Caco-2 (cell line): ENCODE measurements at regions of chr17 and their contacts with region 1.

Region 1: DNA sequence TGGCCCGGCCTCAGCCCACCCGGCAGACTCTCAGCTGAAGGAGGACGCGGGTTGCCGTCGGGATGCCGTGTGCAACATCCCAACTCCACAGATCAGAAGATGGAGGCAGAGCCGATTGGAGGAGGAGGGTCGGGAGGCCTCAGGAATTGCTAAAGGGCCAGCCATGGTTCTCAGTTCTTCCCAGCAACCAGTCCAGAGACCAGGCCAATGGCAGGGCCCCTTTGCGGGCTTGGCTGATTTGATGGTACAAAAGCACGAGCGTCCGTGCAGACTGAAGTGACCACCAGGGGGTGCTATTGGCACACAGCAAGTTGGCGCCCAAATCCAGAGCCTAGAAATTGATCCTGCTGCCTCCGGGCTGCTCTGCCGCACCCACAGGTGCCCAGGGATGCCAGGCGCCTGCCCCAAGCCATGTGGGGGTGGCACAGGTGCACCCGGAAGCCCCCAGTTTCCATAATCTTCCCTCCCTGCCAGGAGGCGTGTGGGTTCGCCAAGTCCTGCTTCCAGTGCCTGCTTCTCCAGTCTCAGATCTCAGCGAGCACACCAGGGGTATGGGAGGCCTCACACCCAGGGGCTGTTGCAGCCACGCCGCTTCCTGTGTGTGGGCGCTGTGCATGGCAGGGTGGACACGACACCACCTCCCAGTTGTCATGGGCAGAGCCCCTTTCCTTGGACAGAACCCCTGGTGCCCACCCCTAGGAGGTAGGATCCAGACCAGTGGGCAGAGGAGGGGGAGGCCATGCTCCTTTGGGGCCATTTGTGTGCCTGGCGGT is 7.1 kb upstream of the TEX19 start:
- DNase-seq: peak; percentile 83 to 89
- H3K4me3 ChIP-seq: no peak overlapping the region
- H3K4me3 Mint-ChIP-seq: no peak overlapping the region
- H3K27ac Mint-ChIP-seq: no peak overlapping the region
- H3K4me1 ChIP-seq: peaks cover 22% of the 10 kb centered on the region
- H3K4me1 Mint-ChIP-seq: peaks cover 23% of the 10 kb centered on the region
- H3K27me3 ChIP-seq: no peaks in the 10 kb centered on the region
- H3K27me3 Mint-ChIP-seq: no peaks in the 10 kb centered on the region
- CTCF ChIP-seq: peak; percentile 95 to 97

Region 2: DNA sequence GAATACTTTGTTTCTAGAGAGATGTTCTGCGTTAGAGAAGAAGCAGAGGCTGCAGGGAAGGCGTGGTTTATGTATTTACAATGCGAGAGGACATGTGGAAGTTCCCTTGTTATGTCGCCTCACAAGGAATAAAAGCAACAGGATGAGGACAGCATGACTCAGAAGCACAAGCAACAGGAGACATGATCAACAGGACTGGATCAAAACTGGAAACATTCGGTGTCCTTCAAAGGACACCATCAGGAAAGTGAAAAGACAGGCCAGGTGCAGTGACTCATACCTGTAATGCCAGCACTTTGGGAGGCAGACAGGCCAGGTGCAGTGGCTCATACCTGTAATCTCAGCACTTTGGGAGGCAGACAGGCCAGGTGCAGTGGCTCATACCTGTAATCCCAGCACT is 191.8 kb before region 1 on chr17:
- CTCF ChIA-PET with region 1: no interaction called
- POLR2A ChIA-PET with region 1: no interaction called
- intact Hi-C with region 1: no loop called
- DNase-seq: peak in 1 of 2 experiments; percentile 18
- H3K4me3 ChIP-seq: no peak overlapping the region
- H3K4me3 Mint-ChIP-seq: no peak overlapping the region
- H3K27ac Mint-ChIP-seq: no peak overlapping the region
- H3K4me1 ChIP-seq: no peaks in the 10 kb centered on the region
- H3K4me1 Mint-ChIP-seq: no peaks in the 10 kb centered on the region
- H3K27me3 ChIP-seq: no peaks in the 10 kb centered on the region
- H3K27me3 Mint-ChIP-seq: no peaks in the 10 kb centered on the region
- CTCF ChIP-seq: no peak

Region 3: DNA sequence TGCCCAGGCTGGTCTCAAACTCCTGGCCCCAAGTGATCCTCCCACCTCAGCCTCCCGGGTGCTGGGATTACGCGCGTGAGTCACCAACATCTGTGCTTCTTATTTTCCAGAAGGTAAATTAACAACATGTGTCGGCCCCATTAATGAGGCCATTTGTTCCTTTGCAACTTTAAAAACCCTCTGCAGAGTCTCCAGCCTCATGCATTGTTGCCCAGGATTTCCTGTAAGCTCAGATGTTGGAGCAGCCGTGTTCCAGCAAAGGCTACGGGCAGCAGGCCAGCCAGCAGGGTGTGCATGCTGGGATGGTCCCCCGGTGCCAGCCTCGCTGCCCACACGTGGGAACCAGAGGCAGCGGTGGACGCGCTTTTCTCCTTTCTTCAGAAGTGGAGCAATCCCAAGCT is 47.1 kb after region 1 on chr17:
- CTCF ChIA-PET with region 1: no interaction called
- POLR2A ChIA-PET with region 1: no interaction called
- intact Hi-C with region 1: loop called (anchors 5 kb)
- DNase-seq: no peak
- H3K4me3 ChIP-seq: no peak overlapping the region
- H3K4me3 Mint-ChIP-seq: no peak overlapping the region
- H3K27ac Mint-ChIP-seq: no peak overlapping the region
- H3K4me1 ChIP-seq: peaks cover 12% of the 10 kb centered on the region
- H3K4me1 Mint-ChIP-seq: peaks cover 24% of the 10 kb centered on the region
- H3K27me3 ChIP-seq: no peaks in the 10 kb centered on the region
- H3K27me3 Mint-ChIP-seq: no peaks in the 10 kb centered on the region
- CTCF ChIP-seq: no peak

Region 4: GRCh38 chr17:82418001-82418986 is 66.4 kb after region 1 on chr17 and contains the starts of genes HEXD and OGFOD3:
- CTCF ChIA-PET with region 1: no interaction called
- POLR2A ChIA-PET with region 1: no interaction called
- intact Hi-C with region 1: loop called (anchors 5 kb)
- DNase-seq: peak; percentile 83 to 94
- H3K4me3 ChIP-seq: peak within 1 kb of the TSS; percentile 95
- H3K4me3 Mint-ChIP-seq: peak within 1 kb of the TSS; percentile 80
- H3K27ac Mint-ChIP-seq: no peak within 1 kb of the TSS
- H3K4me1 ChIP-seq: 0 out of 2 replicates have a peak, but pooled peaks cover 3% of the 10 kb centered on the region
- H3K4me1 Mint-ChIP-seq: no peaks in the 10 kb centered on the region
- H3K27me3 ChIP-seq: no peaks in the 10 kb centered on the region
- H3K27me3 Mint-ChIP-seq: no peaks in the 10 kb centered on the region
- CTCF ChIP-seq: no peak
- total RNA-seq, gene HEXD: 29.5 and 34.2 TPM in 2 replicates
- total RNA-seq, gene OGFOD3: 47.2 and 51.2 TPM in 2 replicates

Region 5: DNA sequence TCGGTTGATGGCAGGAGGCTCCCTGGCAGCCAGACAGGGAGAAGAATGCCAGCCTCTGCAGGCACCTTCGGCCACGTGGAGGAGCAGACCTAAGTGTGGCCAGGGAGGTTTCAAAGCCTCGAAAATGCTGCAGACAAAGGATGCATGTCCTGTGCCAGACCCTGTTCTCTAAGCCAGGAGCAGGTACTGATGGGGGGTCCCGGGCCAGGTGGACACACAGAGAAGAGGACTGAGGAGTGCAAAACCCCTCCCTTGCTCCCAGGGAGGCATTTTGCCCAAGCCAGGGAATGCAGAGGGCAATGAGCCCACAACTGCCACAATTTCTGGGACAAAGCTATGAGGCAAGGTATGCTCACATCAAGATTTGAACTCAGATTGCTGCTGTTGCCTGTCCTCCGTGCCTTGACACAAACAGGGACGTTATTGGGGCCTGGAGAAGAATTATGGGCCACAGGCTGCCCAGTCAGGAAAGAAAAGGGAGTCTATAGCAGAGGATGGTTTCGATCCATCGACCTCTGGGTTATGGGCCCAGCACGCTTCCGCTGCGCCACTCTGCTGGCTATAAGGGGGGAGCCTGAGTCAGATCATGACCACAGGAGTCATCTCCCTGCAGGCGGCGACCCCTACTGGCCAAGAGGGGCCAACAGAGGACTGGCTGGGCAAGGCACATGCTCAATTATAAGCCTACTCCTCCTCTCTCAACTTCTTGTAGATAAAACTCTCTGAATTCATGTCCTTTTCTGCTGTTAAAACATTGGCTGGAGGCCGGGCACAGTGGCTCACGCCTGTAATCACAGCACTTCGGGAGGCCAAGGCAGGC is 142.5 kb after region 1 on chr17:
- CTCF ChIA-PET with region 1: no interaction called
- POLR2A ChIA-PET with region 1: no interaction called
- intact Hi-C with region 1: loop called (anchors 5 kb)
- DNase-seq: peak; percentile 90 to 94
- H3K4me3 ChIP-seq: no peak overlapping the region
- H3K4me3 Mint-ChIP-seq: peak overlapping the region; percentile 67
- H3K27ac Mint-ChIP-seq: peak overlapping the region; percentile 93
- H3K4me1 ChIP-seq: peaks cover 19% of the 10 kb centered on the region
- H3K4me1 Mint-ChIP-seq: peaks cover 12% of the 10 kb centered on the region
- H3K27me3 ChIP-seq: no peaks in the 10 kb centered on the region
- H3K27me3 Mint-ChIP-seq: peaks cover 4% of the 10 kb centered on the region
- CTCF ChIP-seq: peak; percentile 86 to 97

Region 6: DNA sequence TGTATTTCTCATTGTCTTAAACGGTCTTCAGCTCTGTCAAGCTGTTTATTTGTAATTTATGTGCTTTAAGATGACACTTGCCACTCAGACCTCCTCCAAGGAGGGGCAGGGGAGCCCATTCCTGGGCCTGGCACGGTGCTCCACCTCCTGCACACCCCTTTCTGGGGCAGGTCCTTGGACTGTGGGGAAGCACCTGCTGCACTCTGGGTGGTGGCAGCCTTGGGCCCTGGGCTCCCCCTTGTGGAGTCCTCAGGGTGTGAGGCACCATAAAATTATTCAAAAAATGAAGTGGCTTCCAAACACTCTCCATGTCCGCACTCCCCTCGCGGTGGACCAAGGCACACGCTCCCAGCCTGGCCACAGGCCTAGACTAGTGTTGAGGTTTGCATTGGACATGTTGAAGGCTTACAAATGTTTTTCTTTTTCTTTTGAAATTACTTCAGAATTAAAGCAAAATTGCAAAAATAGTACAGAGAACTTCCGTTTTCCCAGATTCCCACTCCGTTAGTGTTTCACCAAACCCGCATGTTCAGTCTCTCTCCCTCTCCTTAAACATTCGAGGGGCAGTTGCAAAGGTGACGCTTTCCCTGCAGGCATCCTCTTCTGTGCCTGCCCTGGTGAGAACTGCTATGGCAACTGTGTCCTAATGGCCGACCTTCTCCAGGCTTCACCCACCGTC is 200.0 kb after region 1 on chr17:
- CTCF ChIA-PET with region 1: interaction called, 3 read pairs
- POLR2A ChIA-PET with region 1: no interaction called
- intact Hi-C with region 1: loop called (anchors 5 kb)
- DNase-seq: peak; percentile 81 to 88
- H3K4me3 ChIP-seq: no peak overlapping the region
- H3K4me3 Mint-ChIP-seq: no peak overlapping the region
- H3K27ac Mint-ChIP-seq: peak overlapping the region; percentile 26
- H3K4me1 ChIP-seq: peaks cover 10% of the 10 kb centered on the region; the same call in 1 of the 2 replicates
- H3K4me1 Mint-ChIP-seq: peaks cover 16% of the 10 kb centered on the region
- H3K27me3 ChIP-seq: no peaks in the 10 kb centered on the region
- H3K27me3 Mint-ChIP-seq: no peaks in the 10 kb centered on the region
- CTCF ChIP-seq: peak; percentile 78 to 91